ENCODE measurements at regions of chrX and their contacts with region 1.

Region 1: DNA sequence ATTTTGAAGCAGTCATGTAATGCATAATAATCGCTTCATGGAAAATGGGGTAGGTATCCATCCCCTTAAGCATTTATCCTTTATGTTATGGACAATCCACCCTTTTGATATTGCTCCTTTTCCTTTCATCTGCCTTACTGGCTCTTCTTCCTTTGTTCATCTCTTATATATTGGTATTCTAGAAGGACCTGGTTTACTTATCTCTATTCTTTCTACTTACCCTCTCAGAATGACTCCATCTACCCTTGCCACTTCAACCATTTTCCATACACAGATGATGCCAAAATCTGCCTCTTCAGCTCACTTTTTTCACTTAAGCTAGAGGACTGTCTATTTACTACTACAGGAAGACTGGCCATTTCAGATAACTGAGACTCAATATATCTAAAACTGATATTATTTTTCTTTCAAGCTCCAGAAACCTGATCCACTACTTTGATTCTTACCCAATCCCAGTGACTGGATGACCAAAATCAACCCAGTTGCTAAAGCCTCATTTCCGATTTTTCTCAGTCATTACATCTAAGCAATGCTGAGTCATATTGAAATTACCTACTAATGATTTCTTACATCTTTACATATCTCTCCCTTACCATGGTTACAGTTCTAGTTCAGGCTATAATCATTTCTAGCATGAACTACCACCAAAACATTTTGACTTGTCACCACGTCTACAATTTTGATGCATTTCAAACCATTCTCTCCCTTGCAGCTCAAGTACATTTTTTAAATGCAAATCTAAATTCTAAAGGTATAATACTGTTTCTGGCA is 93.7 kb downstream of the FAAH2 start:
- DNase-seq: no peak
- H3K4me3 Mint-ChIP-seq: no peak overlapping the region
- H3K27ac Mint-ChIP-seq: peak overlapping the region; percentile 55
- H3K4me1 Mint-ChIP-seq: peaks cover 10% of the 10 kb centered on the region
- H3K27me3 Mint-ChIP-seq: no peaks in the 10 kb centered on the region

Region 2: DNA sequence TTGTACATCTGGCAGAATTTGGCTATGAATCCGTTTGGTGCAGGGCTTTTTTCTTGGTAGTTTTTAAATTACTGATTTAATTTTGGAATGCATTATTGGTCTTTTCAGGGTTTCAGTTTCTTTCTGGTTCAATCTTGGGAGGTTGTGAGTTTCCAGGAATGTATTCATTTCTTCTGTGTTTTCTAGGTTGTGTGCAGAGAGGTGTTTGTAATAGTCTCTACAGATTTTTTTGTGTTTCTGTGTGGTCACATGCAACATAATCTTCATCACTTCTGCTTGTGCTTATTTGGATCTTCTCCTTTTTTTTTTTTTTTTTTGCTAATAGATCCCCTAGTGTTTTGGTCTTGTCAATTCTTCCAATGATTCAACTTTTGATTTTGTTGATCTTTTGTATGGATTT is 16.1 kb before region 1 on chrX:
- intact Hi-C with region 1: loop called (anchors 1 kb)
- DNase-seq: no peak
- H3K4me3 Mint-ChIP-seq: no peak overlapping the region
- H3K27ac Mint-ChIP-seq: peak overlapping the region; percentile 73
- H3K4me1 Mint-ChIP-seq: peaks cover 6% of the 10 kb centered on the region
- H3K27me3 Mint-ChIP-seq: no peaks in the 10 kb centered on the region

Measured in activated CD4-positive, alpha-beta T cell treated with anti-CD3 and anti-CD28 coated beads, Interleukin-2, amount 10 ng/mL, durations not matched to agents 24 days and 14 days (primary cell).